Prostate gland (tissue), 2 donors: ENCODE measurements at regions of chr22 and their contacts with region 1.

Region 1: DNA sequence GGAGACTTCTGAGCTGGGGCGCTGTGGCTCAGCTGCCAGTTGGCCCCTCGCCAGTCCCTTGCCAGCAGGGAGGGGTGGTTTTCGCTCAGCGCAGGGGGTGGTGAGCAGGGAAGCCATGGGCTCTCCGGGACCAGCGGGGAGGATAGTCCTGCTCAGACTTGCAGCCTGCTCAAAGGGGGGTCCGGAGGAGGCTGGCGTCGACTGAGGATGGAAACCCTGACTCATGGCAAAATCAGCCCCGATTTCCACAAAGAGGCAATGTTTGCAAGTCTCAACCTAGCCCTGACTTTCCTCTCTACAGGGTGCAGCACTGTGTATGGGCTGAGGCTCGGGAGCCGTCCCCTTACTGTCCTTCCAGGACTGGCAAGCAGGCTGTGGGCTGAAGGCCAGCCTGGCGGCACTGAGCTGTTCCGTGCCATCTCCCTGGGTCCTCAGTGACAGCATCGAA is 35.1 kb downstream of the FBLN1 start:
- DNase-seq: peak; percentile 90
- H3K4me3 ChIP-seq: no peak overlapping the region
- H3K27ac ChIP-seq: peak overlapping the region; percentile 67 to 77
- H3K4me1 ChIP-seq: no peaks in the 10 kb centered on the region
- H3K27me3 ChIP-seq: no peaks in the 10 kb centered on the region
- CTCF ChIP-seq: no peak
- POLR2A ChIP-seq: peak; percentile 42

Region 2: GRCh38 chr22:45516923-45517675 is 20.7 kb before region 1 on chr22:
- intact Hi-C with region 1: loop called (anchors 1 kb)
- DNase-seq: no peak
- H3K4me3 ChIP-seq: no peak overlapping the region
- H3K27ac ChIP-seq: peak overlapping the region; percentile 21 to 35
- H3K4me1 ChIP-seq: no peaks in the 10 kb centered on the region
- H3K27me3 ChIP-seq: no peaks in the 10 kb centered on the region
- CTCF ChIP-seq: no peak
- POLR2A ChIP-seq: no peak